ENCODE measurements at regions of chrX and their contacts with region 1.

Region 1: DNA sequence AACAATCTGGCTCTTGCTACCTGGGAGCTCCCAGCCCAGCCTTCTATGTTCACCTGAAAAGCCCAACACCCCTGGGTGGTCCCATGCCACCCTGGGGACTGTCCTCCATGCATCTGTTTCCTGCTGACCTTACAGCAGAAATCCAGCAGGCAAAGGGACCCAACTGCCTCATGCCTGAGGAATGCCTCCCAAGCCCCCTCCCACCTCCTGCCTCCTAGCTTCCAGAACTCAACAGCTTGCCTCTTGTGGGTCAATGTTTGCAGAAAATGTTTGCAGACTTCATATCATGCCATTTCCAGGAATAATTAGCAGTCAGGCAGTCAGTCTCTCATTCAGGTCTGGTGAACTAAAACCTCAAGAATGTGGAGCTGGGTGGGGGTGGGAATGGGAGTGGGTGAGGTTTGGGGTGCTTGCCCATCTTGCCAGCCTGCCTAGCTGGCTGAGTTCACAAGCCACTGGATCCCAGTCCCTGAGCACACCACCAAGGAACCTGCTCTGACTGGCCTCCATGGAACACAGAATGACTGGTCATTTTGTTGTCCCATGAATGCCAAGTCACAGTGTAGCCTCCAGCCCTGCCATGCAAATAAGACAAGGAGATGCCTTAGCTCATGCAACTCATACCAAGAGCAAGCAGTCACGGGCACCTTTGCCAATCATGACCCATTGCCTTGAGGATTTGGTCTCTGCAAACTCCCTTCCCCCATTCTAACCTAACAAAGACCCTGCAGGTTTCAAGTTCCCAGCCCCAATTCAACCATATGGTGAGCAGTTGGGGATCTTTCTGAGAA is 12.1 kb upstream of the PLAC1 start:
- DNase-seq: peak; percentile 88 to 98
- H3K4me3 ChIP-seq: no peak overlapping the region
- H3K27ac ChIP-seq: peak overlapping the region; percentile 85
- H3K4me1 ChIP-seq: peaks cover 32% of the 10 kb centered on the region
- H3K27me3 ChIP-seq: no peaks in the 10 kb centered on the region
- CTCF ChIP-seq: no peak

Region 2: DNA sequence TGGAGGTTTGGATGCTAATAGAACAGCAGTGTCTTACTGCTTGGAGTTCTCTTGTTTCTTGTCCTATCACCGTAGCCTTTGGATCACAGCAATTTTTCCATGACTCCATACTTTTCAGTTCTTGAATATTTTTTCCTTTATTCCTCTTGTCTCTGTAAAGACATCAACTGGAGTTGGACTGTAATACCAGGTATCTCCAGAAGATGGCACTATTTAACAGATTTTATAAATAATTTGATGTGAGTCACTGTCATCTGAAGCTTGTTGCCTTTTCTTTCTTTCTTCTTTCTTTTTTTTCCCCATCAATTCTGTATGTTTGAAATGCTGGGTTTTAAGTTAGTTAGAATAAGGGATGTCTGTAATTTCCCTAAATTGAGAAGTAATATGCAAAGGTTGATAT is 186.3 kb before region 1 on chrX:
- CTCF ChIA-PET with region 1: no interaction called
- POLR2A ChIA-PET with region 1: no interaction called
- intact Hi-C with region 1: loop called (anchors 1 kb)
- DNase-seq: peak in 1 of 2 experiments; percentile 62
- H3K4me3 ChIP-seq: no peak overlapping the region
- H3K27ac ChIP-seq: no peak overlapping the region
- H3K4me1 ChIP-seq: no peaks in the 10 kb centered on the region
- H3K27me3 ChIP-seq: no peaks in the 10 kb centered on the region
- CTCF ChIP-seq: peak; percentile 94

Region 3: GRCh38 chrX:134526399-134526798 is 143.9 kb before region 1 on chrX:
- CTCF ChIA-PET with region 1: no interaction called
- POLR2A ChIA-PET with region 1: interaction called, 26 read pairs
- intact Hi-C with region 1: loop called (anchors 1 kb)
- DNase-seq: no peak
- H3K4me3 ChIP-seq: no peak overlapping the region
- H3K27ac ChIP-seq: no peak overlapping the region
- H3K4me1 ChIP-seq: peaks cover 19% of the 10 kb centered on the region
- H3K27me3 ChIP-seq: no peaks in the 10 kb centered on the region
- CTCF ChIP-seq: no peak

Region 4: DNA sequence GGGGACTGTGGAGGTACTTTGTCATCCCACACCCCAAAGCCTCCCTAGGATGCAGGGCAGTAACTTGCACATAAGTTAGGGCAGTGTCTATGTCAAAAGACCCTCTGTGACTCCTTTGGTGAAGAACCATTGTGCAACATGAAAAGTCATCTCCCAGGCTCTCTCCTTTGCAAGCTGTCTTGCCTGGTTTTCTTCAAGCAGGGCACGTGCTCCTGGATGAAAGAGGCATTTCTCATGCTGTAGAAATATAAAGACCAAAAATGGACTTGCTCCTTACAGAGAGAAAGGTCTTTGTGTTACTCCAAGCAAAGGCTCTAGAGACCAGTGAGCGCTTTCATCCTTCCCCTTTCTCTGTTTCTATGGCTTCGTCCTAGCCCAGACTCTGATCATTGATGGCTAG is 56.9 kb before region 1 on chrX:
- CTCF ChIA-PET with region 1: no interaction called
- POLR2A ChIA-PET with region 1: no interaction called
- intact Hi-C with region 1: loop called (anchors 1 kb)
- DNase-seq: no peak
- H3K4me3 ChIP-seq: no peak overlapping the region
- H3K27ac ChIP-seq: no peak overlapping the region
- H3K4me1 ChIP-seq: no peaks in the 10 kb centered on the region
- H3K27me3 ChIP-seq: no peaks in the 10 kb centered on the region
- CTCF ChIP-seq: no peak

Region 5: DNA sequence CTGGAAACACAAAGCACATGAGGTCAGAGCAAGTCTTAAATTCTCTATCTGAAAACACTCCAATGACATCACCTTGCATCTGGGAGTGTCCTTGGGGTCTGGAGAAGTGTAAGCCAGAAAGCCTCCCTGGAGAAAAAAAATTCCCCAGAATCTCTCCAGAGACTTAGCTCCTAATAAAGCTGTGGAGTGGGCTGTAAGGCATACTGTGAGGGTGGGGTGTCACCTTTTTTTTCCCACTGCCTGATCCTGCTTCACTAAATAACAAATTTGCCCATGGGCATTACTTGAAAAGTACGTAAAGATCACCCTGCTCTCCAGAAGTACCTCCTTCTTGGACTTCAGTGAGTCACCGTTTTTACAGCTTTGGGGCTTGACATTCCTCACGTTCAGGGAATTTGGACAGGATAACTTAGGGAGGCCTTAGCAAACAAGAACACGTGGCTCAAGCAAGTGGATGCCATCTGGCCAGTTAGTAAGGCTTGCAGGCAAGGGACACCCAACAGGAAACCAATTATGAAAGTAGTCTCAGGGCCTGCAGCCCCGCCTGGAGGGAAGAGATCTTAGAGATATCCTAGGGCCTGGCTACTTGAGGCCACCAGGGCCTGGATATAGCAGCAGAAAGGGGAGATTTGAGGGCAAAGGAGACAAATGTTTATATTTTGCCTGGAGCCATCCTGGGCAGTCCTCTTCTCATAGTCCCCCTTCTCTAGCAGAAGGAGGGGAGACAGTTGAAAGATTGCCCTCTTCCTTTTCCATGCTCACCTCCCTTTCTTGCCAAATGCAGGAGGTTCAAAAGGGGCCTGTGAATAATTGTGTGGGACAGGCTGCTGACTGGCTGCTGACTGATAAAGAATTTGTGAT is 48.0 kb after region 1 on chrX:
- CTCF ChIA-PET with region 1: no interaction called
- POLR2A ChIA-PET with region 1: no interaction called
- intact Hi-C with region 1: loop called (anchors 1 kb)
- DNase-seq: peak; percentile 85 to 100
- H3K4me3 ChIP-seq: no peak overlapping the region
- H3K27ac ChIP-seq: peak overlapping the region; percentile 64
- H3K4me1 ChIP-seq: peaks cover 26% of the 10 kb centered on the region
- H3K27me3 ChIP-seq: no peaks in the 10 kb centered on the region
- CTCF ChIP-seq: peak; percentile 24; the same call in 1 of the 2 replicates

Region 6: GRCh38 chrX:134936542-134936941 is 266.2 kb after region 1 on chrX:
- CTCF ChIA-PET with region 1: no interaction called
- POLR2A ChIA-PET with region 1: no interaction called
- intact Hi-C with region 1: loop called (anchors 1 kb)
- DNase-seq: peak; percentile 19 to 87
- H3K4me3 ChIP-seq: no peak overlapping the region; the same call in 1 of the 2 replicates
- H3K27ac ChIP-seq: peak overlapping the region; percentile 71
- H3K4me1 ChIP-seq: peaks cover 16% of the 10 kb centered on the region
- H3K27me3 ChIP-seq: no peaks in the 10 kb centered on the region
- CTCF ChIP-seq: no peak